HepG2 (cell line): ENCODE measurements at regions of chr5 and their contacts with region 1.

Region 1: DNA sequence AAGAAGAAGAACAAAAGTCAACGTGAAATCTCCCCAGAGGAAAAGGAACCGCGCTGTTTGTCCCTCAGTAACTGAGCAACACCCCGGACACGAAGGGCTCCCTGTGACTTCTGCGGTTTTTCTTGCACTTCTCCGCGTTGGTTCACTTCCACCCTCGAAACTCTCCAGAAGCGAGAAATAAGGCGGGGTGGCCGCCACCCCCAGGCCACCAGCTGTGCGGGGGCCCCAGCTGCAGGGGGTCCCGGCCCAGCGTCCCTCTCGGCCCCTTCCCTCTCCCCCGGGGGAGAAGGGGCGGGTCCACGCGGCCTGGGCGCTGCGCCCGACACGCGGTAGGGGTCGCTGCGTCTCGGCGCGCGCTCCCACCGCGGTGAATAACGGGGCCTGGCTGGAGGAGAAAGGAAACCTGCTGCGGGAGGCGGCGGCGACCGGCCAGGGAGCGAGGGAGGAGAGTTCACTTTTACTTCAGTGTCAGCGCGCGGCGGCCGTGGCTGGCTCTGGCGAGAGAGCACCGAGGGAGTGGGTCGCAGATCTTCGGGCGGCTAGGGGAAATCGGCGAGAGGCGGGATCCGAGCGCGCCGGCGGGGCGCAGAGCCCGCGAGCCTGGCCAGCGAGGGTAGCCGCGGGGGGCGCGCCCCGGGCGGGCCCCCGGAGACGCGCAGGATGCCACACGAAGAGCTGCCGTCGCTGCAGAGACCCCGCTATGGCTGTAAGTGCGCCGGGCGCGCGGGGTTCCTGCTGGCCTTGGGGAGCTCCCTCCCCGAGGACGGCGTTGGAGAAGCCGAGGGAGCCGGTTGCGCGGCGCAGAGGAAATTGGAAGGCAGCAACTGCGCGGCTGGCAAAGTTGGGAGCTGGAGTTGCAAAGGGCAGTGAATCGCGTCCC is at the start of gene IQGAP2:
- DNase-seq: peak; percentile 50
- ATAC-seq: peak; percentile 71
- H3K4me3 ChIP-seq: peak within 1 kb of the TSS; percentile 64 to 90 (median 77)
- H3K27ac ChIP-seq: peak within 1 kb of the TSS; percentile 97
- H3K4me1 ChIP-seq: peaks cover 61% of the 10 kb centered on the region
- H3K27me3 ChIP-seq: no peaks in the 10 kb centered on the region
- CTCF ChIP-seq: peak; percentile 96
- EP300 ChIP-seq: 0 out of 4 replicates have a peak, but pooled peaks of 1 of the 2 experiments have one; percentile 12
- POLR2A ChIP-seq: peak; percentile 61 to 71
- RAD21 ChIP-seq: peak; percentile 89
- total RNA-seq, gene IQGAP2: 83.3 and 143 TPM in 2 replicates

Region 2: DNA sequence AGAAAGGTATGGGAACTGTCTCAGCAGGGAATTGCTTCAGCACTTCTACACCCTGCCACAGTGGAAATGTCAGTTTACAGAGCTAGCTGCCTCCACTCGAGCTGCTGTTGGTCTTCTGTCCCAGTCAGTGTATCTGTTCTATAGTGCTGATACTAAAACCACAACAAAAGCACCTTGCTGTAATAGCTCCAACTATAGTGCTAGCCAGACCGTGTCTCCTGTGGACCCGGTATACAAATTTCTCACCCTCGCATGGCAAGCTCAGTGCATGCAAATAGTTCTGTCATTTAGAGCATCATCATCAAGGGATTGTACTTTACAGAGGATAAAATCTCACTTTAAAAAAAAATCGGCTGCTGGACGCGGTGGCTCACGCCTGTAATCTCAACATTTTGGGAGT is 51.5 kb before region 1 on chr5:
- CTCF ChIA-PET with region 1: no interaction called
- POLR2A ChIA-PET with region 1: no interaction called
- in situ Hi-C with region 1: no loop called
- intact Hi-C with region 1: no loop called
- DNase-seq: no peak
- ATAC-seq: no peak
- H3K4me3 ChIP-seq: no peak overlapping the region
- H3K27ac ChIP-seq: no peak overlapping the region
- H3K4me1 ChIP-seq: no peaks in the 10 kb centered on the region
- H3K27me3 ChIP-seq: no peaks in the 10 kb centered on the region
- CTCF ChIP-seq: no peak
- EP300 ChIP-seq: no peak
- POLR2A ChIP-seq: no peak
- RAD21 ChIP-seq: no peak

Region 3: DNA sequence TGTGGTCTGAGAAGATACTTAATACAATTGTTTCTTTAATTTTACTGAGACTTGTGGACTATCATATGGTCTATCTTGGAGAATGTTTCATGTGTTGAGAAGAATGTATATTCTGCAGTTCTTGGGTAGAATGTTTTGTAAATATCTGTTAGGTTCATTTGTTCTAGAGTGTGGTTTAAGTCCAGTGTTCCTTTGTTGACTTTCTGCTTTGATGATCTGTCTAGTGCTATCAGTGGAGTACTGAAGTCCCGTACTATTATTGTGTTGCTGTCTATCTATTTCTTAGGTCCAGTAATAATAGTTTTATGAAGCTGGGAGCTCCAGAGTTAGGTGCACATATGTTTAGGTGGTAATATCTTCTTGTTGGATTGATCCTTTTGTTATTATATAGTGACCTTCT is 36.1 kb after region 1 on chr5:
- CTCF ChIA-PET with region 1: no interaction called
- POLR2A ChIA-PET with region 1: no interaction called
- in situ Hi-C with region 1: no loop called
- intact Hi-C with region 1: loop called (anchors 5 kb)
- DNase-seq: no peak
- ATAC-seq: no peak
- H3K4me3 ChIP-seq: no peak overlapping the region
- H3K27ac ChIP-seq: no peak overlapping the region
- H3K4me1 ChIP-seq: peaks cover 36% of the 10 kb centered on the region
- H3K27me3 ChIP-seq: no peaks in the 10 kb centered on the region
- CTCF ChIP-seq: no peak
- EP300 ChIP-seq: no peak
- POLR2A ChIP-seq: no peak
- RAD21 ChIP-seq: no peak

Region 4: GRCh38 chr5:76473661-76474060 is 70.5 kb after region 1 on chr5:
- CTCF ChIA-PET with region 1: no interaction called
- POLR2A ChIA-PET with region 1: interaction called, 3 read pairs
- in situ Hi-C with region 1: no loop called
- intact Hi-C with region 1: loop called (anchors 1 kb)
- DNase-seq: no peak
- ATAC-seq: no peak
- H3K4me3 ChIP-seq: no peak overlapping the region
- H3K27ac ChIP-seq: peak overlapping the region; percentile 77
- H3K4me1 ChIP-seq: peaks cover 83% of the 10 kb centered on the region
- H3K27me3 ChIP-seq: no peaks in the 10 kb centered on the region
- CTCF ChIP-seq: no peak
- EP300 ChIP-seq: no peak
- POLR2A ChIP-seq: no peak
- RAD21 ChIP-seq: no peak

Region 5: DNA sequence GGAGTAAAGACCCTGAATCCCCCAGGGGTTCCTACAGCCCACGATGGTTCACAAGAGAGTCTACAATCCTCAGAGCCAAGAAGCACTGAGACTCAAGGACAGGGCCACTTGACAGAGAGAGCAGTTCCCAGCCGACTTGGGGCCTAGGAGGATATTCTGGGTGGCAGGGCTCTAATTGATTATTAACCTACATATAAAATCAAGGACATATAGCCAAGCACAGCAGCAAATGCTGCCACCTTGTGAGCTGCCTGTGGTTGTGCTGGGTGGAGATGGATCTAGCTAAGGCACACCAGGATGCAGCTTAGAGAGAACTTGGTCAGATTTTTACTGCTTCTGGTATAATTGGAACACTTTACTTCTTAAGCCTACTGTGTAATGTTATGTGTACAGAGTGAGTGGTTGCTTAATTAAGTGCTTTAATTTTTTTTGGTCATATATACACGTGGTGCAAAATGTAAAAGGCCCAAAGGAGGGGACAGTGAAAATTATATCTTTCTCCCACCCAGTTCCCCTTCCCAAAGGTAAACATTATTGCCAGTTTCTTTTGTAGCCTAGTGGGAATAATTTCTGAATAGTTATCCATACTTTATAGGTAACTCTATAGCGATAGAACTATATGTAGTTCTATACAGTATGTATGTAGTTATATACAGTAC is 141.3 kb after region 1 on chr5:
- CTCF ChIA-PET with region 1: interaction called, 21 read pairs
- POLR2A ChIA-PET with region 1: interaction called, 11 read pairs
- in situ Hi-C with region 1: loop called (anchors 5 kb)
- intact Hi-C with region 1: loop called (anchors 1 kb)
- DNase-seq: peak; percentile 70
- ATAC-seq: peak; percentile 87
- H3K4me3 ChIP-seq: no peak overlapping the region
- H3K27ac ChIP-seq: peak overlapping the region; percentile 21
- H3K4me1 ChIP-seq: peaks cover 73% of the 10 kb centered on the region
- H3K27me3 ChIP-seq: no peaks in the 10 kb centered on the region
- CTCF ChIP-seq: peak; percentile 87
- EP300 ChIP-seq: no peak
- POLR2A ChIP-seq: no peak
- RAD21 ChIP-seq: peak; percentile 89